ENCODE measurements at regions of chr15 and their contacts with region 1.

Region 1: GRCh38 chr15:48861813-48862431 is 16.0 kb upstream of the EID1 start:
- DNase-seq: peak; percentile 64
- ATAC-seq: peak; percentile 61
- H3K4me3 Mint-ChIP-seq: no peak overlapping the region
- H3K27ac Mint-ChIP-seq: no peak overlapping the region
- H3K4me1 Mint-ChIP-seq: peaks cover 17% of the 10 kb centered on the region
- H3K27me3 Mint-ChIP-seq: peaks cover 20% of the 10 kb centered on the region

Region 2: DNA sequence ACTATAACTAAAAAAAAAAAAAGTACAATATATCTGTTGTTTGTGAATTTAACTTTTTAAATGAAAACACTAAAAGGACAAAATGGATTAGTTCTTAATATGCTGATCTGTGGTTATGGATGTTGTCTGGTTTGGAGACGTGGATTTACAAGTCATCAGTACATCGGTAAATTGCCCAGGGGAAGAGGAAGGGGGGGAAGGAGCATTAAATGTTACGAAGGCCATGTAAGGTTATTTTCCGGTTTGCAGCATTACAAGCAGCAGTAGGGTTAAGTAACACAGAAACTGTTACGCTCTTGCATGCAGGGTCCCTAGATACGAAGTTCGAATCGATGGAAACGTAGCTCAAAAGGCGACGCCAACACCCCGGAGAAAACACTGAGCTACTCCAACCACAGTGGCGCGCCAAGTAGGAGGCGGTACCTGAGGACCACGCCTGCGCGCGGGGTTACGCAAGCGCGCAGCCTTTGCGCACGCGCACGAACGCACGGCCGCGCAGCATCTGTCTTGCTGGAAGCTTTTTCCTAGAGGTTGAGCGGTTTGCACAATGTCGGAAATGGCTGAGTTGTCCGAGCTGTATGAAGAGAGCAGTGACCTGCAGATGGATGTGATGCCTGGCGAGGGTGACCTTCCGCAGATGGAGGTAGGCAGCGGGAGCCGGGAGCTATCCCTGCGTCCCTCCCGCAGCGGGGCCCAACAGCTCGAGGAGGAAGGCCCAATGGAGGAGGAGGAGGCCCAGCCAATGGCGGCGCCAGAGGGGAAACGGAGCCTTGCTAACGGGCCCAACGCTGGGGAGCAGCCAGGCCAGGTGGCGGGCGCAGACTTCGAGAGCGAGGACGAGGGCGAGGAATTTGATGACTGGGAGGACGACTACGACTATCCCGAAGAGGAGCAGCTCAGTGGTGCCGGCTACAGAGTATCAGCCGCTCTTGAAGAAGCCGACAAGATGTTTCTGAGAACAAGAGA is 16.0 kb after region 1 on chr15 and contains the start of gene EID1:
- CTCF ChIA-PET with region 1: interaction called, 16 read pairs
- POLR2A ChIA-PET with region 1: interaction called, 8 read pairs
- DNase-seq: peak; percentile 95
- ATAC-seq: peak; percentile 96
- H3K4me3 Mint-ChIP-seq: peak within 1 kb of the TSS; percentile 99
- H3K27ac Mint-ChIP-seq: peak within 1 kb of the TSS; percentile 100
- H3K4me1 Mint-ChIP-seq: peaks cover 25% of the 10 kb centered on the region
- H3K27me3 Mint-ChIP-seq: peaks cover 8% of the 10 kb centered on the region
- total RNA-seq, gene EID1: 85.3 to 89.5 TPM

Region 3: DNA sequence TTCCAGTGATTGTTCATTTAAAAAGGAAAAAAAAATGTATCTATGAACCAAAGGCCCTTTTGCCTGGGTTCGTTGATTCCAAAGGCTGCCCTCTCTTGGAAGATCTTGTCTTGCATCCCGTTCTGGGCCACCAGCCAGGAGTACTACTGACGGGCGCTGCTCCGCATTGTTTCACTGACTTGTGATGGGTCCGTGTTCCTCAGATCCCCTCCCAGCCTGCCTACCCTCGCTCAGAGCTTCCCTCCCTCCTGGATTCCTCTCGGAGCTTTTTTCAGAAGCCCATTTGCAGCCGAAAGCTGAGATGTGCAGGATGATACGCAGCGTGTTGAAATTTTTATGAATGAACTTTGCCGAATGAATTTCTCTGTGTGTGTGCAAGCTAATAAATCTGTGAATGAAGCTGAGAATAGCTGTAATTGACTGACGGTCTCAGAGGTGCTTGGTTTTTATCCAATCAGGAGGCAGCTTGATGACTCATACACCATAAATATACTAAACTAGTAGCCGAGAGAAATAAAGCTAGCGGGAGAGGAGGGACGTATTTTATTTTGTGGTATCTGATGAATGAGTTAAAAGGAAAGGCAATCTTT is 101.7 kb after region 1 on chr15 and contains the start of gene SHC4:
- CTCF ChIA-PET with region 1: interaction called, 86 read pairs
- POLR2A ChIA-PET with region 1: interaction called, 11 read pairs
- DNase-seq: peak; percentile 41
- ATAC-seq: peak; percentile 56
- H3K4me3 Mint-ChIP-seq: peak within 1 kb of the TSS; percentile 69
- H3K27ac Mint-ChIP-seq: peak within 1 kb of the TSS; percentile 72
- H3K4me1 Mint-ChIP-seq: peaks cover 56% of the 10 kb centered on the region
- H3K27me3 Mint-ChIP-seq: peaks cover 22% of the 10 kb centered on the region
- total RNA-seq, gene SHC4: 0.65 to 0.66 TPM

Region 4: DNA sequence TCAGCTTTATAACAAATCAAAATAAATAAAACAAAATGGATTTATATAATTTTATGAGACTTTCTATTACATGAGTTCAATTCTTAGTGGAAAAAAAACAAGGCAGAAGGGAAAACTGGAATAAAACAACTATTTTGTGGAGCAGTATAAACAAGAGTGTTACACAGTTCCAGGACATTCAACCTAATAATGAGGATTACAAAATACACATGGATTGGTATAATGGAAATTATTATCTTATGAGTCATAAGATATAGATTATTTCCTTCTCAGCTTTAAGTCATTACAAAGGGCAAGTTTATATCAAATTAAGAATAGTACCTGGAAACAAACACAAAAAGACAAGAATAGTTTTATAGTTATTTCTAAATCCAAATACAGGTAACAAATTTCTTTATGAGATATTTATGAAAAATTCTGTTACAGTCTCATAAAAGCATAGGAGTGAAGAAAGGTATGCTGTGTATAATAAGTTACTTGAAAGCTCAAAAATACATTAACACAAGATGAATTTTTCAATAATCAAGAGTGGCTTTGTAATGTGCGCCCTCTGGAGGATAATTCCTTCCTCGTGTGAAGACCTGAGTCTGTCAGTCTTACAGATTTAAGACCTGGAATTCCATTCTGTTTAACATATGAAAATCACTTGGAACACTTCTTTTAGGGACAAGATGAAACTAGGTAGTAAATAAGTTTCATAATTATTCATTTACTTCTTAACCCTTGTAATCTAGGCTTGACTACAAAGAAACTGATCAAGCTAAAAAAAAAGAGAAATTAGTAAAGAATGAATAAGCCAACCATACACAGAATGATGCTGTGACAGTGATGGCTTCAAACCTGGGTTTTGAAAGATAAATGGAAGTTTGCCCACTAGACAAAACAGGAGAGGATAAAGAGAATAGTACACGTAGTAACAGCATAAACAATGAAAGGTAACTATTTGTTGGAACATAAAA is 284.0 kb after region 1 on chr15:
- CTCF ChIA-PET with region 1: interaction called, 103 read pairs
- POLR2A ChIA-PET with region 1: no interaction called
- DNase-seq: peak; percentile 53
- ATAC-seq: peak; percentile 55
- H3K4me3 Mint-ChIP-seq: no peak overlapping the region
- H3K27ac Mint-ChIP-seq: no peak overlapping the region
- H3K4me1 Mint-ChIP-seq: peaks cover 21% of the 10 kb centered on the region
- H3K27me3 Mint-ChIP-seq: no peaks in the 10 kb centered on the region

Region 5: DNA sequence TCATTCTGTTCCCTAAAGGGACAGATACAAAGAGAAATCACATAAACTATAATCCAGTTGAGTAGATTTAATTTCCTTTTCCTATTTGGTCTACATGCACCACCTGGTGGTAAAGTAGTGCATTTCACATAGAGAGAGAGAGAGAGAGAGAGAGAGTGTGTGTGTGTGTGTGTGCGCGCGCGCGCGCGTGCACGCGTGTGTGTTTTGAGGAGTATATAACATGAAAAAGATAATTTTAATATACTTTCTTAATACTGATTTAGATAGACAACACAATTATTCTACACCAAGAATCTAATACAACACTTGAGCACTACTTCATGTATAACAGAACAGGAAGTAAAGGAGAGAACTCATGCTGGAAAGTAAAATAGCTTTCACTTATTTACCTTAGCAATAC is 560.1 kb after region 1 on chr15:
- CTCF ChIA-PET with region 1: interaction called, 15 read pairs
- POLR2A ChIA-PET with region 1: no interaction called
- DNase-seq: peak; percentile 48
- ATAC-seq: no peak
- H3K4me3 Mint-ChIP-seq: no peak overlapping the region
- H3K27ac Mint-ChIP-seq: peak overlapping the region; percentile 32
- H3K4me1 Mint-ChIP-seq: peaks cover 3% of the 10 kb centered on the region
- H3K27me3 Mint-ChIP-seq: peaks cover 4% of the 10 kb centered on the region